Psoas muscle (tissue), 8 donors: ENCODE measurements at regions of chr7 and their contacts with region 1.

Region 1: DNA sequence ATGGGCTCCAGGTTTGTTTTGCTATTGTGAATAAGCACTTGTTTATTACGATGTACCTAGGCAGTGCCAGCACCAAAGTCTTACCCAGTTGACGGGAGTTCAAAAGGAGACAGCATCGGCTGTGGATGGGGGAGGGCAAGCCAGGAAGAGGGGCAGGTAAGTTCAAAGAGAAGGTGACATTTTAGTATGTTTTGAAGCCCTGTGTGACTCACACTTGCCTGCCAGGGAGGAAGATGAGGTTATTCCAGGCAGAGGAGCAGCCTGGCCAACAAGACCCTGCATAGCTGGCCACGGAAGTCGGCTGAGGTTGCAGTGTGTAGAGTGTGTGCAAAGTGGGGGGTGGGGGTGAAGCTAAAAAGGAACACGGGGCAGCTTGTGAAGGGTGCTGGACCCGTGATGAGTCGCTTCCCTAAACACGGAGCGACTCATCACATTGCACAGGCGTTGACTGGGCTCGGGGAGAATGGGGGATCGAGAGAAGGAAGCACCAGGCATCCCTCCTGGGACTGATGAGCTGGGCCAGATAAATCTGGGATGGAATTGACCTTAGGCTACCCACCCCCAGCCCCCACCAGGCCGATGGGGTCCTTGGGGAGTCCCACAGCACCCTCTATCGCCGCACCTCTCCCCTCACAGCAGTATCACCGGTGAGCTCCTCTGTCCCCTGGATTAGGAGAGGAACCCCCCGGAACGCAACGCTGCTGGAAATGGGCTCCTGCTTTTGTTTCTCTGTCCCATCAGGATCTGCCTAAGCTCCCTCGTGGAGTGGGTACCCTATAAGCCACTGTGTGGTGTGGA is 97.9 kb upstream of the IKZF1 start:
- DNase-seq: no peak
- ATAC-seq: no peak
- H3K4me3 ChIP-seq: no peak overlapping the region
- H3K27ac ChIP-seq: no peak overlapping the region
- H3K4me1 ChIP-seq: no peaks in the 10 kb centered on the region
- H3K27me3 ChIP-seq: no peaks in the 10 kb centered on the region
- CTCF ChIP-seq: no peak

Region 2: DNA sequence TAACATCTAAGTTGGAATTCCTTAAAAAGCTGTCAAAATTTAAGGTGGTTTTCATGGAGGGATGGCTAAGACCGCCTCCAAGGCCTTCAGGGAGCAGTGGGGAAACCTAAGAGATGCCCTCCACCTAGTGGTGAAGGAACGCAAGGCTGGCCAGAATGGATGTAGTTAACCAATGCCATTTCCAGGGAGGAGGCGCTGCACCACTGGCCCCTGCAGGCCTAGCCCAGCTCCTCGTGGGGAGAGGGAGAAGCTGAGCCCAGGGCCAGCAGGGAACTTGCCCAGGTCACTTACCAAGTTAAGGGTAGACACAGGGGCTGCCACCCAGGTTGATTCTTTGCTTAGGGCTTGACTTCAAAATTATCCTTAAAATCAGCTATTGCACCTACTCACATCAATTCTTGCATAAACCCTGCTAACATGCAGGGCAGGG is 211.4 kb after region 1 on chr7:
- intact Hi-C with region 1: loop called (anchors 2 to 5 kb)
- DNase-seq: peak; percentile 50 to 68
- ATAC-seq: peak; percentile 66 to 86 (median 79)
- H3K4me3 ChIP-seq: no peak overlapping the region
- H3K27ac ChIP-seq: no peak overlapping the region
- H3K4me1 ChIP-seq: no peaks in the 10 kb centered on the region
- H3K27me3 ChIP-seq: no peaks in the 10 kb centered on the region
- CTCF ChIP-seq: peak; percentile 66

Region 3: GRCh38 chr7:50423860-50424259 is 217.2 kb after region 1 on chr7:
- intact Hi-C with region 1: loop called (anchors 2 to 5 kb)
- DNase-seq: no peak
- ATAC-seq: no peak
- H3K4me3 ChIP-seq: no peak overlapping the region
- H3K27ac ChIP-seq: no peak overlapping the region
- H3K4me1 ChIP-seq: no peaks in the 10 kb centered on the region
- H3K27me3 ChIP-seq: no peaks in the 10 kb centered on the region
- CTCF ChIP-seq: no peak

Region 4: GRCh38 chr7:50679218-50680007 is 472.8 kb after region 1 on chr7:
- intact Hi-C with region 1: loop called in 1 of 2 experiments (anchors 5 kb)
- DNase-seq: no peak
- ATAC-seq: peak; percentile 81 to 89 (median 86)
- H3K4me3 ChIP-seq: no peak overlapping the region
- H3K27ac ChIP-seq: peak overlapping the region; percentile 81
- H3K4me1 ChIP-seq: peaks cover 80% of the 10 kb centered on the region
- H3K27me3 ChIP-seq: no peaks in the 10 kb centered on the region
- CTCF ChIP-seq: peak; percentile 46

Region 5: GRCh38 chr7:51162724-51163329 is 956.2 kb after region 1 on chr7:
- intact Hi-C with region 1: loop called in 1 of 2 experiments (anchors 5 kb)
- DNase-seq: peak in 1 of 2 donors; percentile 37
- ATAC-seq: peak; percentile 84 to 94 (median 90)
- H3K4me3 ChIP-seq: no peak overlapping the region
- H3K27ac ChIP-seq: no peak overlapping the region
- H3K4me1 ChIP-seq: peaks cover 12% of the 10 kb centered on the region
- H3K27me3 ChIP-seq: no peaks in the 10 kb centered on the region
- CTCF ChIP-seq: peak; percentile 83